GM12878 (cell line): ENCODE measurements at regions of chr6 and their contacts with region 1.

Region 1: DNA sequence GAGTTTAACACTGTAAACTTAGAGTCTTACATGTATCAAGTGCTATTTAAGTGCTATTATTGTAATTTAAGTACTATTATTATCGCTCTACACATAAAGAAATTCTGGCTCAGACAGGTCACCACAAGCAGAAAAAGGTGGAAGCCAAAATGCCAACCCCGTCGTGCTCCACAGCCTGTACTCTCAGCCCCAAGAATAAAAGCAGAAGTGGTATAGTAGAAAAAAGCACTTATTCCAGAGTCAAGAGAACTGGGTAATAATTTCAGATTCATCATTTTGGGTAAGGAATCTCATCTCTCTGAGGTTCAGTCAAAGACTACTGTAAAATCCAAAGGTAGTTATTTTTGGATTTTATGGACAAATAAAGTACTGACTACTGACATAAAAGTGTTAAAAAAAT is 943 bp downstream of the ZUP1 start:
- DNase-seq: no peak
- ATAC-seq: peak; percentile 71
- H3K4me3 ChIP-seq: peak overlapping the region; percentile 92
- H3K27ac ChIP-seq: peak overlapping the region; percentile 92
- H3K4me1 ChIP-seq: no peaks in the 10 kb centered on the region; the same call in 1 of the 2 replicates
- H3K27me3 ChIP-seq: peaks cover 0 to 2% of the 10 kb centered on the region in 2 experiments; a peak in 1 of 4 replicates
- CTCF ChIP-seq: no peak
- EP300 ChIP-seq: 0 out of 4 replicates have a peak, but pooled peaks of 1 of the 2 experiments have one; percentile 16
- POLR2A ChIP-seq: no peak
- RAD21 ChIP-seq: no peak

Region 2: GRCh38 chr6:116010790-116011401 is 656.7 kb before region 1 on chr6:
- CTCF ChIA-PET with region 1: no interaction called
- POLR2A ChIA-PET with region 1: no interaction called
- RAD21 ChIA-PET with region 1: no interaction called
- SMC1A ChIA-PET with region 1: no interaction called
- in situ Hi-C with region 1: no loop called
- intact Hi-C with region 1: loop called (anchors 10 kb)
- DNase-seq: no peak
- ATAC-seq: peak; percentile 67
- H3K4me3 ChIP-seq: peak overlapping the region; percentile 9; the same call in 1 of the 2 replicates
- H3K27ac ChIP-seq: peak overlapping the region; percentile 59
- H3K4me1 ChIP-seq: peaks cover 53% of the 10 kb centered on the region
- H3K27me3 ChIP-seq: no peaks in the 10 kb centered on the region
- CTCF ChIP-seq: peak; percentile 82 to 88 (median 84)
- EP300 ChIP-seq: no peak
- POLR2A ChIP-seq: no peak
- RAD21 ChIP-seq: peak; percentile 95

Region 3: GRCh38 chr6:116279260-116280063 is 388.2 kb before region 1 on chr6 and contains the start of gene TSPYL1:
- CTCF ChIA-PET with region 1: no interaction called
- POLR2A ChIA-PET with region 1: no interaction called
- RAD21 ChIA-PET with region 1: no interaction called
- SMC1A ChIA-PET with region 1: no interaction called
- in situ Hi-C with region 1: no loop called
- intact Hi-C with region 1: loop called (anchors 5 kb)
- DNase-seq: peak; percentile 90
- ATAC-seq: peak; percentile 94
- H3K4me3 ChIP-seq: peak within 1 kb of the TSS; percentile 86
- H3K27ac ChIP-seq: peak within 1 kb of the TSS; percentile 96
- H3K4me1 ChIP-seq: no peaks in the 10 kb centered on the region
- H3K27me3 ChIP-seq: no peaks in the 10 kb centered on the region
- CTCF ChIP-seq: peak in 2 of 3 experiments; percentile 16 to 18; a peak in 1 of 6 replicates
- EP300 ChIP-seq: 0 out of 4 replicates have a peak, but pooled peaks of 1 of the 2 experiments have one; percentile 33
- POLR2A ChIP-seq: peak; percentile 94
- RAD21 ChIP-seq: no peak
- polyA plus RNA-seq, gene TSPYL1: 22.9 to 29.9 TPM

Region 4: DNA sequence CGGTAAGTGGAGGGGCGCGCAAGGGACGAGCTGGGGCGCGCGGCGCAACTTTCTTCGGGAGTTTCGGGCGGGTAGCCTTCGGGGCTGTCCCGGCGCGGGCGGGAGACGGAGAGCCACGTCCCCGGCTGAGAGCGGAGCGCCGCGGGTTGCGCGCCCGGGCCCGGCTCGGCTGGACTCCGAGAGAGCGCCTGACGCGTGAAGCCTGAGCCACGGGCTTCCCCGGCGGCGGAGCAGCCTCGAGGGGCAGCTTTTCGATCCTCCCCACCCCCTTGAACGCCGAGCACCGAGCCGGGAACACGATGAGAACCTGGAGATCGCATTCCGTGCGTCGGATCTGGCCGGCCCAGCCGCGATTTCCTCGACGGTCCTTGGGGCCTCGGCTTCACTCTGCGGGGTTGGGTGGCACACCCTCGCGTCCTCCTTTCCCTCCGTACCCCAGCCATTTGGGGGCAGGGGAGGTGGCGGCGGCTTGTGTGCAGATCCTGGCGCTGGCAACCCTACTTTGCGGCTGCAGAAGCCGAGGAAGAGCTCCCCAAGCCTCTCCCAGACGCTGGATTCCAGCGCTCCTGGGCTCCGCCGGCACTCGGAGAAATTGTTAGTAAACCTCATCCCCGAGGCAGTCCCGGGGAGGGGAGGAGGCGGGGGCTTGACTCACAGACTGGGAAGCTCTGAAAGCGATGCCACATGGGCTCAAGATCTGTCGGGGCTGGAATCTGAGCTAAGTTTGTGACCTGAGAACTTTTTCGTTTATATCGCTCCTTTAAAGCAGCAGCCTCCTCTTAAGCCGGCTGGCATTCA is 296.3 kb before region 1 on chr6:
- CTCF ChIA-PET with region 1: no interaction called
- POLR2A ChIA-PET with region 1: no interaction called
- RAD21 ChIA-PET with region 1: no interaction called
- SMC1A ChIA-PET with region 1: no interaction called
- in situ Hi-C with region 1: no loop called
- intact Hi-C with region 1: loop called (anchors 10 kb)
- DNase-seq: no peak
- ATAC-seq: peak; percentile 73
- H3K4me3 ChIP-seq: peak overlapping the region; percentile 92
- H3K27ac ChIP-seq: peak overlapping the region; percentile 92
- H3K4me1 ChIP-seq: peaks cover 23% of the 10 kb centered on the region
- H3K27me3 ChIP-seq: no peaks in the 10 kb centered on the region
- CTCF ChIP-seq: no peak
- EP300 ChIP-seq: 0 out of 4 replicates have a peak, but pooled peaks of 1 of the 2 experiments have one; percentile 34
- POLR2A ChIP-seq: peak; percentile 37; the same call in 1 of the 2 replicates
- RAD21 ChIP-seq: no peak

Region 5: GRCh38 chr6:116570856-116571682 is 96.6 kb before region 1 on chr6 and contains the start of gene RWDD1:
- CTCF ChIA-PET with region 1: no interaction called
- POLR2A ChIA-PET with region 1: interaction called, 11 read pairs
- RAD21 ChIA-PET with region 1: interaction called, 3 read pairs
- SMC1A ChIA-PET with region 1: interaction called, 3 read pairs
- in situ Hi-C with region 1: no loop called
- intact Hi-C with region 1: no loop called
- DNase-seq: peak; percentile 95
- ATAC-seq: peak; percentile 94
- H3K4me3 ChIP-seq: peak within 1 kb of the TSS; percentile 88
- H3K27ac ChIP-seq: peak within 1 kb of the TSS; percentile 81
- H3K4me1 ChIP-seq: peaks cover 5% of the 10 kb centered on the region; the same call in 1 of the 2 replicates
- H3K27me3 ChIP-seq: no peaks in the 10 kb centered on the region
- CTCF ChIP-seq: peak in 1 of 3 experiments; percentile 2; a peak in 1 of 6 replicates
- EP300 ChIP-seq: no peak
- POLR2A ChIP-seq: peak; percentile 93
- RAD21 ChIP-seq: no peak
- polyA plus RNA-seq, gene RWDD1: 57.2 to 87.9 TPM

Region 6: DNA sequence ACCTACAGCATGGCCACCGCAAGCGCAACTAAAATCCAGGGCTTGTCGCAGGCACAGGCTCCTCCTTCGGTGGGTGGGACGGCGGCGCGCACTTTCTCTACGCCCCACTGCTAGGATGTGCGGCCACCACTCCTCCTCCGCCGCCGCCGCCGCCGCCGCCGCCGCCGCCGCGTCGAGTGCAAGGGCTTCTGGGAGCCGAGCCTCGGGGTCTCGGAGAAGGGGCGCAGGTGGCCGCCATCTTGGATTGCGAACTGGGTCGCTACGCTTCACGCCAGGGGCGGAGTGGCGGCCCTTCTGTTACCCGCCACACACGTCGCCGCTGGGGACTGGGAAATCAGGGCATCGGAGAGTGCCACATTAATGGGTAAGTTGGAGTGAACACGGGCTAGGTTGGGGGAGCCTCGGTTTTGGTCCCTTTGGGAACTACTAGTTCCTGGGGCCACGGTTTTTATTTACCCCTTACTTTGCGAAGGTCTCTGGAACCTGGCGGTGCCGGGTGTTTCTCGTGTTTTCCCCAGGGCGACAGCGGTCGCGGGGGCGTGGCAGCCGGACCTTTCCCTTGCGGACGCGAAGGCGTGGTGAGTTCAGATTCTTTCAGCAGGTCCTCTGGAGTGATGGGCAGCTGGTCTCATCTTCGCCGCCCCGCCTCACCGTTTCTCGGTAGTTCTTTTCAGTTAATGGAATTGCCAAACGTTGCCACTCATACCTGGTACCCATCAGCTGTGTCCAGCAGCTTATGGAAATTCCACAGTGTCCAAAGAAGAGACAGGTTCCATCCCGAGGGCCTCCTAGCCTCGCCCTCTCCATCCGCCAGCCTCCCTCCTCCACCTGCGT is 13.6 kb after region 1 on chr6 and contains the start of gene KPNA5:
- CTCF ChIA-PET with region 1: interaction called, 5 read pairs
- POLR2A ChIA-PET with region 1: interaction called, 19 read pairs
- RAD21 ChIA-PET with region 1: interaction called, 8 read pairs
- SMC1A ChIA-PET with region 1: interaction called, 7 read pairs
- in situ Hi-C with region 1: no loop called
- intact Hi-C with region 1: loop called (anchors 1 kb)
- DNase-seq: peak; percentile 69
- ATAC-seq: peak; percentile 96
- H3K4me3 ChIP-seq: peak within 1 kb of the TSS; percentile 98
- H3K27ac ChIP-seq: peak within 1 kb of the TSS; percentile 89
- H3K4me1 ChIP-seq: no peaks in the 10 kb centered on the region
- H3K27me3 ChIP-seq: no peaks in the 10 kb centered on the region
- CTCF ChIP-seq: no peak
- EP300 ChIP-seq: no peak
- POLR2A ChIP-seq: peak; percentile 96
- RAD21 ChIP-seq: no peak
- polyA plus RNA-seq, gene KPNA5: 1.9 to 2.5 TPM